Endothelial cell of umbilical vein (primary cell): ENCODE measurements at regions of chr19 and their contacts with region 1.

Region 1: DNA sequence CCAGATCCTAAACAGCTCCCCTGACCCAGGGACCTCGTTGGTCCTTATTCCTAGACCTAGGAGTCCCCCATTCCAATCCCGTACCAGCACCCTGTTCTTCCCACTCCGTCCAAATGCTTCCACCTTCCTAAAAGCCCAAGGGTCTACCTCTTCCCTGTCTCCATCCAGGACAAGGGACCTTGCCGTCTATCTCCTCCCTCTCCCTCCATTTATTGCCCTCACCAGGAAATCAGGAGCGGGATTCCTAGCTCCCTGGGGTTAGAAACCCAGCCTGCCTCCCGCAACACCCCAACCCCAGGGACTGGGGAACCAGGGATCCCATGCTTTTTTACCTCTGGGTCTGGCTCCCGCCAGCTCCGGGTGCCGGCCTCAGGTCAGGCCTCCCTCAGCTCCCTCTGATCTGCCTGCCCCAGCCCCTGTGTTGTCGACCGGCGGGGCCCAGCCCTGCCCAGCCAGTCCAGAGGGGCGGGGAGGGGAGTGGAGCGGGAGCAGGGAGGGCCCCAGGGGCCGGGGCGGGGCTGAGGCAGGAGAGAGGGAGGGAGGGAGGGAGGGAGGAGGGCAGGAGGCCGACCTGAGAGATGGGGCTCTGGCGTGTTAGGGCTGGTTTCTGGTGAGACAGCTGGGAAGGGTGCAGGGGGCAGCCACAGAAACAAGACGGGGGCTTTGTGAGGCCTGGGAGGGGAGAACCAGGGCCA is at the start of gene B3GNT8:
- DNase-seq: peak; percentile 60
- H3K4me3 ChIP-seq: peak within 1 kb of the TSS; percentile 41 to 49 (median 41)
- H3K27ac ChIP-seq: peak within 1 kb of the TSS; percentile 62
- H3K4me1 ChIP-seq: peaks cover 25% of the 10 kb centered on the region
- H3K27me3 ChIP-seq: no peaks in the 10 kb centered on the region
- CTCF ChIP-seq: no peak
- POLR2A ChIP-seq: peak; percentile 51
- total RNA-seq, gene B3GNT8: 6.5 and 7.6 TPM in 2 replicates

Region 2: GRCh38 chr19:41321600-41322270 is 105.4 kb before region 1 on chr19:
- CTCF ChIA-PET with region 1: interaction called, 20 read pairs
- POLR2A ChIA-PET with region 1: no interaction called
- dilution Hi-C with region 1: no loop called
- intact Hi-C with region 1: loop called (anchors 1 kb)
- DNase-seq: peak; percentile 76
- H3K4me3 ChIP-seq: no peak overlapping the region
- H3K27ac ChIP-seq: peak overlapping the region; percentile 100
- H3K4me1 ChIP-seq: peaks cover 46% of the 10 kb centered on the region
- H3K27me3 ChIP-seq: no peaks in the 10 kb centered on the region
- CTCF ChIP-seq: peak; percentile 83 to 89
- POLR2A ChIP-seq: peak; percentile 38

Region 3: DNA sequence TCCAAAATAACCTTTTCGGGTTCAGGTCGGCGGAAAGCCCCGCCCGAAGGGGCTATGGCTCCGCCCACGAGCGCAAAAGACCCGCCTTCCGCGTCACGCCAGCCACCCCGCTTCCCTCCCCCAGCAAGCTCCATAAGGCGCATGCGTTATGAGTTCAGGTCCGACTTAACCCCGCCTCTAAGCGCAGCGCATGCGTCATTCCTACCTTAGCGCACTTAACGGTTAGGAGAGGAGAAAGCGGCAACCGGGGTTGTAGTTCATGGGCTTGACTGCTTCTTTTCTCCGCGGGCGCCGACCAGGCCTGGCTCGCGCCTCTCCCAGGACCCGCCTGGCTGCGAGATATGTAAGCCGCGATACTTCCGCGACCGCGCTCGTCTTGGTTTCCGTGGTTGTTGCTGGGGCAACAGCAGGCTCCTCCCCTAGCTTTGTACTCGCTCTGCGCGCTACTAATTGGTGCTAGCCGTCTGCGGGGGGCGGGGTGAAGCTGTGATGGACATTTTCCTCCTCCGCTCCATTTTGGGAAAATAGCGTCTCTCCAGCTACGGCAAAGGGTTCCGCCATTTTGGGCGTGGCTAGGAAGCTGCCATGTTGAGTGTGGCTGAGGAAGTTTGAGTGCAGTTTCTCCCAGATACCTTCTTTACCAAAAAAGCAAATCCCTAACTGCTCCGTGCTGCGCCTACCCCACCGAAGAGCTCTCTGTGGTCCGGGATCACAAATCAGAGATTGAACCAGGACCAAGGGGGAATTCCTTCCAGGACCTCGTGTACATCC is 63.2 kb before region 1 on chr19 and contains the start of gene B9D2:
- CTCF ChIA-PET with region 1: interaction called, 7 read pairs
- POLR2A ChIA-PET with region 1: interaction called, 4 read pairs
- dilution Hi-C with region 1: no loop called
- intact Hi-C with region 1: loop called (anchors 2 kb)
- DNase-seq: peak; percentile 99
- H3K4me3 ChIP-seq: peak within 1 kb of the TSS; percentile 40 to 86 (median 60)
- H3K27ac ChIP-seq: peak within 1 kb of the TSS; percentile 88
- H3K4me1 ChIP-seq: peaks cover 20% of the 10 kb centered on the region
- H3K27me3 ChIP-seq: no peaks in the 10 kb centered on the region
- CTCF ChIP-seq: no peak
- POLR2A ChIP-seq: peak; percentile 91
- total RNA-seq, gene B9D2: 12.2 and 13.6 TPM in 2 replicates

Region 4: DNA sequence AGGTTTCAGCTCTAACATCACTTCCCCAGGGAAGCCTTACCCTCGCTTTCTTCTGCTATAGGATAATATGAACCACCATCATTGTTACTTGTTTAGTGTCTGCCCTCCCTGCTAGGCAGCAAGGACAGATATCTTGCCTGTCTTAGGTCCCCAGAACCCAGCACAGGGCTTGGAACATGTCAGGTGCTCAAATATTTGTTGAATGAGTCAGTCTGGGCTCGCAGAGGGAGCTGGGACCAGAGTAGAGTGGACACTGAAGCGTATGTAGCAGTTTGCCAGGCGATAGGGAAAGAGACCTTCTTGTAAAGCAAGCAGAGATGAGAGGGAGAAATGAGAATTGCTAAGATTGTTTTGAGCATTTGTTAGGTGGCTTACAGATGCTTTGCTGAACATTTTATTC is 17.8 kb before region 1 on chr19:
- CTCF ChIA-PET with region 1: interaction called, 20 read pairs
- POLR2A ChIA-PET with region 1: no interaction called
- dilution Hi-C with region 1: no loop called
- intact Hi-C with region 1: no loop called
- DNase-seq: peak; percentile 15
- H3K4me3 ChIP-seq: no peak overlapping the region
- H3K27ac ChIP-seq: no peak overlapping the region
- H3K4me1 ChIP-seq: peaks cover 12% of the 10 kb centered on the region
- H3K27me3 ChIP-seq: no peaks in the 10 kb centered on the region
- CTCF ChIP-seq: no peak
- POLR2A ChIP-seq: no peak

Region 5: DNA sequence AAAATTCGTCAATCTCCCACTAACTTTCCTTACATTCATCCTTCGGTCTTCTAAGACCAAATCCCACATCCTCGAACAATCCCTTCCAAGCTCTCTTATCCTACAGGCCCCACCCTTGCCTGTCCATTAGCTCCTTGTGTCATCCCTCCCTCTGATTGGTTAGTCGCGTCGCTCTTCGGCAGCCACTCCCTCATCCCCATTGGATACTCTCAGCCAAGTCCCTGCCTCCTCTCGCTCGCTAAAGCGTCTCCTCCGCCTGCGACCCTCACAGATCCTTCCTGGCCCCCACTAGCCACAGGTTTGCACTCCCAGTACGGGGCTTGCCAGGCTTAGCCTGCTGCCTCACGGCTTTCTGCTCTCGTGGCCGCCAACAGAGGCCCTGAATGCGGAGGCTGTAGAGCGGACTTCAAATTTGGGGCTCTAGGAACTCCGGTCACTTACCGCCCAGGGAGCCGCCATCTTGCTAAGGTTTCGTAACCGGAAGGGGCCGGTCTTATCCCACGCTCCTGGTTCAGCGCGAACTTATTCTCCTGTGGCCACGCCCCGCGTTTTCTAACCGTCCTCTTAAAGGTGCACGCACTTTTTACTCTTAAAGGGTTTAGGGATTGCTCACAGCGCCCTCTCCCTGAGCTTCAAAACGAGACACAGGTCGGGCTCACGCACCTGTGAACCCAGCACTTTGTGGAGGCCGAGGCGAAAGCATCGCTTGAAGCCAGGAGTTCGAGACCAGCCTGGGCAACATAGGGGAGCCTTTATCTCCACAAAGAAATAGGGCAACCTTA is 12.5 kb after region 1 on chr19 and contains the start of gene DMAC2:
- CTCF ChIA-PET with region 1: interaction called, 12 read pairs
- POLR2A ChIA-PET with region 1: no interaction called
- dilution Hi-C with region 1: no loop called
- intact Hi-C with region 1: no loop called
- DNase-seq: peak; percentile 98
- H3K4me3 ChIP-seq: peak within 1 kb of the TSS; percentile 66 to 87 (median 76)
- H3K27ac ChIP-seq: peak within 1 kb of the TSS; percentile 89
- H3K4me1 ChIP-seq: peaks cover 6% of the 10 kb centered on the region
- H3K27me3 ChIP-seq: peaks cover 0 to 2% of the 10 kb centered on the region in 2 experiments
- CTCF ChIP-seq: peak; percentile 37 to 52
- POLR2A ChIP-seq: peak; percentile 79
- total RNA-seq, gene DMAC2: 63.2 and 65.4 TPM in 2 replicates